ENCODE measurements at regions of chr7 and their contacts with region 1.

Region 1: DNA sequence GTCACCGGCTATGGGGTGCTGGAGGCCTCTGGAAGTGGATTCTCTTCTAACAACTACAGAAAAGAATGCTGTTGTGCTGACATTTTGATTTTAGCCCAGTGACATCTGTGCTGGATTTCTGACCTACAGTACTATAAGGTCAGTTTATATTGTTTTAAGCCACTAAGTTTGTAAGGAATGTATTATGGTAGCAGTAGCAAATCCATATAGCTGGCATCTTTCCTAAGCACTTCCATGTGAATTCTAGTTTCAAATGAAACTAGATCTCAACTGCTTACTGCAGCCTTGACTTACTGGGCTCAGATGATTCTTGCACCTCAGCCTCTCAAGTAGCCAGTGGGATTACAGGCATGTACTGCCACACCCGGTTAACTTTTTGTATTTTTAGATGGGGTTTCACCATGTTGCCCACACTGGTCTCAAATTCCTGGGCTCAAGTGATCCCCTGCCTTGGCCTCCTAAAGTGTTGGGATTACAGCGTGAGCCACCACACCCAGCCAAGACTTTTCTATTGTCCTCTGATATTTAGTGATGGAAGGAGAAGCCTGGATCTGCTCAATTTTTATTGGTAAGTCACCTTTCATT is 414.0 kb downstream of the PHTF2 start:
- DNase-seq: no peak
- H3K4me3 ChIP-seq: no peak overlapping the region
- H3K27ac ChIP-seq: no peak overlapping the region
- H3K4me1 ChIP-seq: no peaks in the 10 kb centered on the region
- H3K27me3 ChIP-seq: peaks cover 5% of the 10 kb centered on the region
- CTCF ChIP-seq: no peak

Region 2: DNA sequence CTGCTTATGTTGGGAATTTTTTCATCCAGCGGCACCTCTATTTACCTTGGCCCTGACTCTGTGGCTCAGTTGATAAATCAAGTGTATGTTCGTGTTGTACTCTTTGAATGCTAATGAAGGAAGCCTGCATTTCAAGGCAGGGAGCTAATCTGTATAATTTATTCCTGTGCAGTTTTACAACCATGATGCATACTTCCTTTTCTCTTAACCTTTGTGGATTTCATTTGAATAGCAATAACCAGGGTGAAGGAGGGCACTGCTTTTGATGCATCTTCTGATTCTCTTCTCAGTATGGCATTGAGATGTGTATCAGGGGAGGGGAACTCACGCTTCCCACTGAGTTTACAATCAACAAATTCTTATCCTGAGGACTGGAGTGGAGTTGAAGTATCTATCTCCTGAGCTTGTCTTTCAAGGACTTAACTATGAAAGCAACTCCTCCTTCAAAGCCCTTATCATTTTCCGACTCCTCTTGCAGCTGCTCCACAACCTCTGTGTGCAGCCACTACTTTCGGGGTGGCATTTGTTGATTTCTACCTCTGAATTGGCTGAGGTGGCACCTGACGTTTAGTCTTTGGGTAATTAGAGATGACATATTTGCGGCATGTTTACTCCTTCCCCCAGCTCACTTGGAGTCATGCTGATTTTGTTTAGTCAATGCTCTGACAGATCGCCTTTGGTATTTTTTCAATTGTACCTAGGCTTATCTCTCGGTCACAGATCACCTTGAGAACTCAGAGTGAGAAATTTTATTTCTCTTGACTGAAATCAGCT is 138.8 kb before region 1 on chr7:
- CTCF ChIA-PET with region 1: no interaction called
- POLR2A ChIA-PET with region 1: no interaction called
- intact Hi-C with region 1: no loop called
- DNase-seq: peak; percentile 92
- H3K4me3 ChIP-seq: no peak overlapping the region
- H3K27ac ChIP-seq: no peak overlapping the region
- H3K4me1 ChIP-seq: peaks cover 26% of the 10 kb centered on the region
- H3K27me3 ChIP-seq: no peaks in the 10 kb centered on the region
- CTCF ChIP-seq: no peak

Region 3: DNA sequence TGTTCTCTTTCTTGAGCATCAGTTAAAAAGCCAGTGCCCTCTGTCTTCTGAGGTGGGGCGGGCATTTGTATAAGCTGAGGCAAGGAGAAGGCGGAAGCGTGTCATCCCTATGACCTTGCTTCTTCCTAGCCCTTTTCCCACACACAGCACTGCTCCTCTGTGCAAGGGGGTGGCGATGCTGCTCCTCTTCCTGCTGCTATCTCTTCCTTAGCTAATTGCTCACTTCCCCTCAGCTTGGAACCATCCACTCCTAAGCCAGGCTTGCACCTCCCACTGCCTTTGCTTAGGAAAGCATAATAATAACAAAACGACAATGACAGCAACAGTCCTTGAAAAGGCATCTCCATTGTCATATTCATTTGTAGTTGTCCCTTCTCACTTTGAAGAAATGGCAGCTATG is 47.1 kb before region 1 on chr7:
- CTCF ChIA-PET with region 1: no interaction called
- POLR2A ChIA-PET with region 1: no interaction called
- intact Hi-C with region 1: loop called (anchors 5 kb)
- DNase-seq: peak; percentile 75
- H3K4me3 ChIP-seq: no peak overlapping the region
- H3K27ac ChIP-seq: no peak overlapping the region
- H3K4me1 ChIP-seq: peaks cover 17% of the 10 kb centered on the region
- H3K27me3 ChIP-seq: no peaks in the 10 kb centered on the region
- CTCF ChIP-seq: no peak

Measured in A673 (cell line).